CD8-positive, alpha-beta memory T cell (primary cell): ENCODE measurements at regions of chr18 and their contacts with region 1.

Region 1: DNA sequence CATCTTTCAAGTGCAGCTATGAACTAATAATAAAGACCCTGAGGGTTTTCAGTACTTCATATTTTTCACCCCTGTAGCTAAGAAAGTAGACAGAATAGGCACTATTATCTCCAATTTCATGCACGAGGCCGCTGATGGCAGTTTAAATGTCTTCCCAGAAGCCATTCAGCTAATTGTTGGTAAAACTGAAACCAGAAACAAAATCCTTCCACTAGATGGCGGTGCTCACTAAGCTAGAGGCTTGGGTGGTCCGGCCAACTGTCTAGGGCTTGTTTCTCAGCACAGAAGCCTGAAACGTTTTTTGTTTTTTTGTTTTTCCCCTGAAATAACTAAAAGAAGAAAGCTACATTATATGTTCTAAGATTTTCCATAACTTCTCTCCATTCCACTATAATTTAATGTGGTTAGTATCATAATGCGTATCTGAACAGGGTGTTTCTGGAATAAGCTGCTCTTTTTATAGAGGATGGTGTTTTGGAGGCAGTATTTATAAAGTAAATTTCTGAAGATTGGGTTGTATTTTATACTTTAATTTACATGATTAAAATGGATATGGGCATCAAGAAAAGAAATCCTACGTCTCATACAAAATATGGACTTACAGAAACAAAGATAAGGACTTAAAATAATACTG is 159.4 kb downstream of the PIK3C3 start:
- DNase-seq: peak; percentile 14 to 55 (median 36)
- H3K4me3 ChIP-seq: no peak overlapping the region
- H3K4me3 Mint-ChIP-seq: peak overlapping the region in 3 of 7 donors; percentile 1 to 55 (median 9)
- H3K27ac ChIP-seq: no peak overlapping the region
- H3K27ac Mint-ChIP-seq: peak overlapping the region in 3 of 8 donors; percentile 2 to 55 (median 12)
- H3K4me1 ChIP-seq: peaks cover 13% of the 10 kb centered on the region
- H3K4me1 Mint-ChIP-seq: peaks cover 12 to 15% (median 13%) of the 10 kb centered on the region in 3 donors
- H3K27me3 ChIP-seq: no peaks in the 10 kb centered on the region
- H3K27me3 Mint-ChIP-seq: peaks cover 0 to 9% of the 10 kb centered on the region in 2 donors

Region 2: DNA sequence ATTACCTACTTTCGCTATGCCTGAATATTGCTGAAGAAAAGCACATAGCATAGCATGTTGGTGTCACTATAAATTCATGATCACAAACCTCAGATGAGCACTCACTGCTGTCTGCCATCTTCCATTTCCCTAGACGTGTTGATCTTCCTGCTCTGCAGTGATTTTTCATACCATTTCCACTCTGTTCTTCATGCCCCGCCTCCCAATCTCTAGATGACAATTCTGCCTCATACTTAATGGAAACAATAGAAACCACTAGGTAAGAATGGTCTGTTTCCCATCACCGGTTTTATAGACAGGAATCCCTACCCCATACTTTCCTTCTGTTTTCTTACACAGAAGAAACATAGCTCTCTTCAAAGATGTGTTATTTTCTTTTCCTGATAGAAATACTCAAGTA is 95.6 kb before region 1 on chr18:
- CTCF ChIA-PET with region 1: no interaction called
- POLR2A ChIA-PET with region 1: no interaction called
- DNase-seq: no peak
- H3K4me3 ChIP-seq: no peak overlapping the region
- H3K4me3 Mint-ChIP-seq: no peak overlapping the region
- H3K27ac ChIP-seq: no peak overlapping the region
- H3K27ac Mint-ChIP-seq: no peak overlapping the region
- H3K4me1 ChIP-seq: no peaks in the 10 kb centered on the region
- H3K4me1 Mint-ChIP-seq: peaks cover 12 to 17% (median 16%) of the 10 kb centered on the region in 3 donors
- H3K27me3 ChIP-seq: no peaks in the 10 kb centered on the region
- H3K27me3 Mint-ChIP-seq: no peaks in the 10 kb centered on the region

Region 3: DNA sequence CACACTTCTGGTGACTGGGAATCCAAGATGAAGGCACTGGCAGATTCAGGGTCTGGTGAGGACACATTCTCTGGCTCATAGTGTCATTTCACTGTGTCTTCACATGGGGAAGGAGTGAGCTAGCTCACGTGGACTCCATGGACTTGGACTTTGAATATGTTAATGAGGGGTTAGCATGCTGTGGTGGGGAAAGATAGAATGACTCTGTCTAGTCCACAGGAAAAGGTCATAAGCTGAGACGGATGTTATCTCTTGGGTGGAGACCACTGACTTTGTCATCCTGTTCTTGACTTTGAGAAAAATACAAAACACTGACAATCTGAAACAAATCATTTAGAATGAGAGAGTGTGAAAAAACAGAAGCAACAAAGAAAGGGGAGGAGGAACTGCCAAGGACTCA is 13.5 kb before region 1 on chr18:
- CTCF ChIA-PET with region 1: interaction called, 14 read pairs
- POLR2A ChIA-PET with region 1: no interaction called
- DNase-seq: no peak
- H3K4me3 ChIP-seq: no peak overlapping the region
- H3K4me3 Mint-ChIP-seq: no peak overlapping the region
- H3K27ac ChIP-seq: no peak overlapping the region
- H3K27ac Mint-ChIP-seq: no peak overlapping the region
- H3K4me1 ChIP-seq: no peaks in the 10 kb centered on the region
- H3K4me1 Mint-ChIP-seq: no peaks in the 10 kb centered on the region
- H3K27me3 ChIP-seq: no peaks in the 10 kb centered on the region
- H3K27me3 Mint-ChIP-seq: peaks cover 0 to 2% of the 10 kb centered on the region in 2 donors

Region 4: DNA sequence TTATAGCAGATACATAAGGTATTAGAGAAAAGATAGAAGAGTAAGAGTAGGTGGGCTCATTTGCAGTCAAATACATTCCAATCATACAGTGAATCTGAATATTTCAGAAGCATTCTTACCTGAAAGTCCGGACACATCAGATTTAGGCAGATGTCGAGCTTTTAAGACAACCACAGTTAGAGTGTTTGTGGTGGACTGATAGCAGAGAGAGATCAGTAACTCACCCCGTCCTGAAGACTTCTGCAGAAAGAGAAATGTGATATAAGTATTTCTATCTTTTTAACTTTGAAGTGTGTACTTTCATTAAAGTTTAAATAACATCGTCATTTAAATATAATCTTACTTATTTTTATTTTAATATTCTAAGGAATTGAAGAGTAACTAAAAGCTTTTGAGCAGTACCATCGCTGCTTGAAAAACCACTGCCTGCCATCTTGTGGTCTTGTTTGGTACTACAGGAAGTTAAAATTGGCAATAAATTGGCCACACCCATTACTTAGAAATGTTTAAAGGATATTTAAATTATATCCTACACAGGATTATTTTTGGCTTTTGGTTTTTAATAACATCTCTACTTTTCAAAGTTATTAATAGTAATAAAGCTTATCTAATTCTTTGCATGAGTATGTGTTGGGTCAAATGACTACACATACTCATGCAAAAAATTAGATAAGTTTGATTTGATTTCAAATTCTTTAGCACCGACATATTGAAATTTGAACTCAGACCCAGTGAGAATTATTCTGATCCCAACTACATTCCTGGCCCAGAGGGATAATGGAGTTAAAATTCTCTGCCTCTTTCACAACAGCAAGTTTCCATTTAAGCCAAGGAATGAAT is 1157.4 kb after region 1 on chr18:
- CTCF ChIA-PET with region 1: interaction called, 20 read pairs
- POLR2A ChIA-PET with region 1: no interaction called
- DNase-seq: peak in 1 of 5 donors; percentile 3
- H3K4me3 ChIP-seq: no peak overlapping the region
- H3K4me3 Mint-ChIP-seq: no peak overlapping the region
- H3K27ac ChIP-seq: no peak overlapping the region
- H3K27ac Mint-ChIP-seq: no peak overlapping the region
- H3K4me1 ChIP-seq: no peaks in the 10 kb centered on the region
- H3K4me1 Mint-ChIP-seq: no peaks in the 10 kb centered on the region
- H3K27me3 ChIP-seq: no peaks in the 10 kb centered on the region
- H3K27me3 Mint-ChIP-seq: no peaks in the 10 kb centered on the region

Region 5: GRCh38 chr18:43592270-43592669 is 1477.8 kb after region 1 on chr18:
- CTCF ChIA-PET with region 1: interaction called, 11 read pairs
- POLR2A ChIA-PET with region 1: no interaction called
- DNase-seq: no peak
- H3K4me3 ChIP-seq: no peak overlapping the region
- H3K4me3 Mint-ChIP-seq: no peak overlapping the region
- H3K27ac ChIP-seq: no peak overlapping the region
- H3K27ac Mint-ChIP-seq: no peak overlapping the region
- H3K4me1 ChIP-seq: no peaks in the 10 kb centered on the region
- H3K4me1 Mint-ChIP-seq: no peaks in the 10 kb centered on the region
- H3K27me3 ChIP-seq: no peaks in the 10 kb centered on the region
- H3K27me3 Mint-ChIP-seq: no peaks in the 10 kb centered on the region